Activated naive CD4-positive, alpha-beta T cell treated with anti-CD3 and anti-CD28 coated beads for 36 hours (primary cell): ENCODE measurements at regions of chr2 and their contacts with region 1.

Region 1: DNA sequence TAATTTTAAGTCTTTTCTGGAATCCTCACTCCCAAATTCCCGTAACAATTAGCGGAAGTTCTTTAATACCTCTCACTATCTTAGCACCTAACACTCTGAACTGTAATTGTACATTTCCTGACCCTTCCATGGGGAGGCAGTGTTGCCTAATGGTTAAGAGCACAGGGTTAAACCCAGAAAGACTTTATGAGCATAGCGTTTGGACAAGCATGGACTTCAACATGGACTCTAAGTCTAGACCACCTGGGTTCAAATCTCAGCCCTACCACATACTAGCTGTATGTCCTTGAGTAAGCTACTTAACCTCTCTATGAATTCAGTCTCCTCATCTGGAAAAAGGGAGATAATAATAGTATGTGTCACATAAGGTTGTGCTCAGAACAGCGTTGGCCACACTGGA is 13.0 kb downstream of the ANTXR1 start:
- DNase-seq: peak; percentile 60
- H3K4me3 Mint-ChIP-seq: no peak overlapping the region
- H3K27ac Mint-ChIP-seq: no peak overlapping the region
- H3K4me1 Mint-ChIP-seq: no peaks in the 10 kb centered on the region
- H3K27me3 Mint-ChIP-seq: peaks cover 6% of the 10 kb centered on the region

Region 2: DNA sequence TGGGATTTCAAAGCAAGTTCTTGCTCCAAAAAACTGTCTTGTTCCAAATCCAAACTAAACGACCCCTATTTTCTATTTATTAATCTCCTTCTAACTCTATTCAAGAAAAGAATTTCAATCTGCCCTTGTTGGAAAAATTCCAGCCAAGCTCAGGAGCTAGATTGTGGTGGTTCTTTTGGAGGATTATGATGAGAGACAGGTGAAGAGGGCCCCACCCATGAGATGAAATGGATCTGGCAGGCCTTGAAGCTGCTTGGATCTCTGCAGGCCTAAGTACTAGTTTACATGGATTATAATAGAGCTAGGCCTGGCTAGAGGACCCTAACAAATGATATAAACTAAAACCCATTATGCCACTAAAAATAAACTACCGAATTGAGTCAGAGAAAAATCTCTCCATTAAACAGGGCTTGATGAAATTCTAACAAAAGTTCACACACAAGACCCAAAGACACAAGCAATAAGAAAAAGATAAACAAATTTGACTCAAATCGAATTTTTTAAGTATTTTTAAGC is 259.4 kb after region 1 on chr2:
- CTCF ChIA-PET with region 1: interaction called, 4 read pairs
- intact Hi-C with region 1: loop called (anchors 5 kb)
- DNase-seq: no peak
- H3K4me3 Mint-ChIP-seq: no peak overlapping the region
- H3K27ac Mint-ChIP-seq: no peak overlapping the region
- H3K4me1 Mint-ChIP-seq: no peaks in the 10 kb centered on the region
- H3K27me3 Mint-ChIP-seq: no peaks in the 10 kb centered on the region

Region 3: DNA sequence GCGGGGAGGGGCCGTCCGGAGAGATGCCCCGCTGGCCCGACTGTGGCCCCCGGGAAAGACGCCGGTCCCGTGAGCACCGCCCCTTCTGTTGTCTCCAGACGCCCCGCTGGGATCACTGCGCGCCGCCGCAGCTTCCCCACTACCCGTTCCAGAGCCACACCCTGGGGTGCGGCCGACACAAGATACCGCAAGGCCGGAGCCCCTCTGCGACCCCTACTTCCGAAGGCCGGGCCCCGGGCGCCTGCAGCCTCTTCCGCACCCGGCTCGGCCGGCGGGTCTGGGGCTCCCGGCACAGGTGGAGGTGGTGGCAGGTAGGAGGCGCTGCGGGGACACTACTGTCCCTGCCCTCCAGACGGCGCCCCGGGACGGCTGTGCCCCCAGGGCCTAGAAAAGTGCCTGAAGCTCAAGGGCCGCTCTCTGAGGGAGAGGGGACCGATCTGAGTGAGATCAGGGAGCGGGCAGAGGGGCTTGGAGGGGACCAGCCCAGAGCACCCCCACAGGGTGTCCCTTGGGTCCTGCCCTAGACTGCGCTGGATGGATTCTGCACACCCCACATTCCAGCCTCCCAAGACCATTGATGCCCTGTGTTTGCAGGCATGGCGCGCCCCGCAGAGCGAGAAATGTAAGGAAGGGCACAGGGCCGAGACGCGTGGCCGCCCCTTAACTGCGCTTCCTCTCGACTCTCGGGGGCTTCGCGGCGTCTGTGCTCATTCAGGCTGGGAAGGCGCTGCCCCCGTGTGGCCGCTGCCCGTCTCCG is 281.0 kb after region 1 on chr2:
- CTCF ChIA-PET with region 1: interaction called, 15 read pairs
- intact Hi-C with region 1: loop called (anchors 1 kb)
- DNase-seq: peak; percentile 76
- H3K4me3 Mint-ChIP-seq: peak overlapping the region; percentile 67
- H3K27ac Mint-ChIP-seq: no peak overlapping the region
- H3K4me1 Mint-ChIP-seq: peaks cover 2% of the 10 kb centered on the region
- H3K27me3 Mint-ChIP-seq: peaks cover 20% of the 10 kb centered on the region